ENCODE measurements at regions of chr1 and their contacts with region 1.

Region 1: GRCh38 chr1:39926343-39926793 is 24.7 kb upstream of the MYCL start:
- DNase-seq: peak in 1 of 2 donors; percentile 39
- H3K4me3 ChIP-seq: no peak overlapping the region
- H3K27ac ChIP-seq: peak overlapping the region; percentile 75 to 90
- H3K4me1 ChIP-seq: peaks cover 0 to 3% of the 10 kb centered on the region in 2 donors
- H3K27me3 ChIP-seq: no peaks in the 10 kb centered on the region
- CTCF ChIP-seq: no peak
- POLR2A ChIP-seq: no peak

Region 2: DNA sequence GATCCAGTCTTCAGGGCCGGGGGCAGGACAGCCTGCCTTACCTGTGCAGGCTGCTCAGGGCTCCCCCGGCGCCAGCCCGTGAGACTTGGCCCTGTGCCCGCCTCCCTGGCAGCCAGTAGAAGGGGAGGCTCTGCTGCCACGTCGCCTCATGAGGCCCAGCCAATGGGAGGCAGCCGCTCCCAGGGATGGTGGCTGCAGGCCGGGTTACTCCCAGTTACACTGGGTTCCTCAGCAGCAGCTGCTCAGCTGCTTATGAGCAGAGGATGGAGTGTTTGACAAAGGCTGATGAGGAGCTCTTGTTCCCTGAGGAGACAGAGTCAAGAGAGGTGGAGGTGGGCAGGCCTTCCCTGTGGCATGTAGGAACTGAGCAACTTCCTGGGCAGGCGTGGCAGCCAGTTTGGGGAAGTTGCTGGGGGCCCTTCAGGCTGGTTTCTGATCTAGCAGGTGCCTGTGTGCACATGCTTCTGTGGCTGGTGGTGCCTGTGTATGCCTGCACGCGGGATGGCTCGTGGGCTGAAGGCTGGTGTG is 34.1 kb after region 1 on chr1:
- intact Hi-C with region 1: loop called (anchors 5 kb)
- DNase-seq: peak in 1 of 2 donors; percentile 52
- H3K4me3 ChIP-seq: peak overlapping the region in 1 of 3 donors; percentile 31
- H3K27ac ChIP-seq: peak overlapping the region in 1 of 2 donors; percentile 48
- H3K4me1 ChIP-seq: peaks cover 0 to 4% of the 10 kb centered on the region in 2 donors
- H3K27me3 ChIP-seq: no peaks in the 10 kb centered on the region
- CTCF ChIP-seq: no peak
- POLR2A ChIP-seq: no peak

Region 3: DNA sequence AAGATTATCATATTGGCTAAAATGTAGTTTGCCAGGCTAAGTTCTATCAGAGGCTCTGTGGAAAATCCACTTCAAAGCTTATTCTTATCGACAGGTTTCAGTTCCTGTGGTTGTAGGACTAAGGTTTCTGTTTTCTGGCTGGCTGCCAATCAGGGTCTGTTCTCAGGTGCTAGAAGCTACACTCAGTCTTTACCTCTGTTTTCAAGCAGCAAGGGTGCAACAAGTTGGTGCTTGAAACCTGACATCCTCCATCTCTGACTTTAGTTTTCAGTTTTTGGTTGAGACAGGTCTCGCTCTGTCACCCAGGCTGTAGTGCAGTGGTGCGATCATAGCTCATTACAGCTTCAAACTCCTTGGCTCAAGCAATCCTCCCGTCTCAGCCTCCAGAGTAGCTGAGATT is 306.1 kb after region 1 on chr1:
- intact Hi-C with region 1: no loop called
- DNase-seq: no peak
- H3K4me3 ChIP-seq: no peak overlapping the region
- H3K27ac ChIP-seq: no peak overlapping the region
- H3K4me1 ChIP-seq: no peaks in the 10 kb centered on the region
- H3K27me3 ChIP-seq: no peaks in the 10 kb centered on the region
- CTCF ChIP-seq: no peak
- POLR2A ChIP-seq: no peak

Measured in breast epithelium (tissue), 4 donors.